Activated CD8-positive, alpha-beta T cell treated with anti-CD3 and anti-CD28 coated beads, Interleukin-2, amount 10 ng/mL, durations not matched to agents 7 days and 5 days (primary cell): ENCODE measurements at regions of chr16 and their contacts with region 1.

Region 1: DNA sequence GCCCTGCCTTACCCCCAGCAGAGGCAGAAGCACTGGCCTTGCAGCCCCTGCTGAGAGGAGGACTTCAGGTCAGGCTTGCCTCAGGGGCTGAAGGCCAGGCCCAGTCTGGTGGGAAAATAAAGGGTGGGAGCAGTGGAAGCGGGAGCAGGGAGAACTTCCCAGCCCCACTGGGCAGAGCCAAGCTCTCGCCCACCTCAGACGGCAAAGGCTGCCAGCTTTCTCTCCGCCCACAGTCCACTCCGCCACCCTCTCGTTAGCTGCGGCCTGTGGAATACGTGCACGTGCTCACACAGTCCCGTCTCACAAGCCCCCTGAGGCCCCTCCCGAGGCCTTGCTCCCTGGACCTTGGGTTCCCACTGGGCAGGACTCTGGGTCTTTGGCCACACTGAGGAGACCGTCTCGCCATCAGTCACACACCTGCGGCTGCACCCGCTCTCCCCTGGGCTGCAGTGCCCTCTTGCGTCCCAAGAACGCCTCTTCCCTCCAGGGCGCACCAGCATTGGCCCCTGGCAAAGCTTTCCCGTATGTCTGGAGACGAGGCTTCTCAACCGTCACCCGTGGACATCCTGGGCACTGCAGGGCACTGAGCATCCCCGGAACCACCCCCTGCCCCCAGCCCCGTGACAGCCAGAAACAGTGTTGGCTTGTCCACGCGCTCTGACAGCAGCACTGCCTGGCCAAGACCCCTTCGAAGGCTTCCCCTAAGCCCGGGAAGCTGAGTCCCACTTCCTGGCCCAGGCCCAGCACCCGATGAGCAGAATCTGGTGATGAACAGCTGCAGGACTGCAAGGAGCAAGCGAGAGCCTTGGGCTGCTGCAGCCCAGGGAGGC is 8.3 kb downstream of the MRPL28 start:
- DNase-seq: peak; percentile 82
- ATAC-seq: peak; percentile 88
- H3K4me3 Mint-ChIP-seq: no peak overlapping the region
- H3K27ac Mint-ChIP-seq: no peak overlapping the region
- H3K4me1 Mint-ChIP-seq: peaks cover 6% of the 10 kb centered on the region
- H3K27me3 Mint-ChIP-seq: no peaks in the 10 kb centered on the region

Region 2: GRCh38 chr16:117379-118365 is 244.4 kb before region 1 on chr16:
- CTCF ChIA-PET with region 1: interaction called, 28 read pairs
- POLR2A ChIA-PET with region 1: no interaction called
- DNase-seq: peak; percentile 74
- ATAC-seq: peak; percentile 90
- H3K4me3 Mint-ChIP-seq: no peak overlapping the region
- H3K27ac Mint-ChIP-seq: no peak overlapping the region
- H3K4me1 Mint-ChIP-seq: no peaks in the 10 kb centered on the region
- H3K27me3 Mint-ChIP-seq: no peaks in the 10 kb centered on the region

Region 3: GRCh38 chr16:228818-229730 is 133.0 kb before region 1 on chr16 and contains the start of gene LUC7L:
- CTCF ChIA-PET with region 1: interaction called, 21 read pairs
- POLR2A ChIA-PET with region 1: no interaction called
- DNase-seq: peak; percentile 91
- ATAC-seq: peak; percentile 89
- H3K4me3 Mint-ChIP-seq: peak within 1 kb of the TSS; percentile 85
- H3K27ac Mint-ChIP-seq: peak within 1 kb of the TSS; percentile 91
- H3K4me1 Mint-ChIP-seq: peaks cover 29% of the 10 kb centered on the region
- H3K27me3 Mint-ChIP-seq: no peaks in the 10 kb centered on the region
- total RNA-seq, gene LUC7L: 56.1 to 58.4 TPM

Region 4: GRCh38 chr16:324451-325334 is 37.4 kb before region 1 on chr16:
- CTCF ChIA-PET with region 1: no interaction called
- POLR2A ChIA-PET with region 1: no interaction called
- DNase-seq: peak; percentile 70
- ATAC-seq: peak; percentile 83
- H3K4me3 Mint-ChIP-seq: peak overlapping the region; percentile 57
- H3K27ac Mint-ChIP-seq: peak overlapping the region; percentile 75
- H3K4me1 Mint-ChIP-seq: peaks cover 42% of the 10 kb centered on the region
- H3K27me3 Mint-ChIP-seq: no peaks in the 10 kb centered on the region